Vagina (tissue), 2 donors: ENCODE measurements at regions of chr18 and their contacts with region 1.

Region 1: DNA sequence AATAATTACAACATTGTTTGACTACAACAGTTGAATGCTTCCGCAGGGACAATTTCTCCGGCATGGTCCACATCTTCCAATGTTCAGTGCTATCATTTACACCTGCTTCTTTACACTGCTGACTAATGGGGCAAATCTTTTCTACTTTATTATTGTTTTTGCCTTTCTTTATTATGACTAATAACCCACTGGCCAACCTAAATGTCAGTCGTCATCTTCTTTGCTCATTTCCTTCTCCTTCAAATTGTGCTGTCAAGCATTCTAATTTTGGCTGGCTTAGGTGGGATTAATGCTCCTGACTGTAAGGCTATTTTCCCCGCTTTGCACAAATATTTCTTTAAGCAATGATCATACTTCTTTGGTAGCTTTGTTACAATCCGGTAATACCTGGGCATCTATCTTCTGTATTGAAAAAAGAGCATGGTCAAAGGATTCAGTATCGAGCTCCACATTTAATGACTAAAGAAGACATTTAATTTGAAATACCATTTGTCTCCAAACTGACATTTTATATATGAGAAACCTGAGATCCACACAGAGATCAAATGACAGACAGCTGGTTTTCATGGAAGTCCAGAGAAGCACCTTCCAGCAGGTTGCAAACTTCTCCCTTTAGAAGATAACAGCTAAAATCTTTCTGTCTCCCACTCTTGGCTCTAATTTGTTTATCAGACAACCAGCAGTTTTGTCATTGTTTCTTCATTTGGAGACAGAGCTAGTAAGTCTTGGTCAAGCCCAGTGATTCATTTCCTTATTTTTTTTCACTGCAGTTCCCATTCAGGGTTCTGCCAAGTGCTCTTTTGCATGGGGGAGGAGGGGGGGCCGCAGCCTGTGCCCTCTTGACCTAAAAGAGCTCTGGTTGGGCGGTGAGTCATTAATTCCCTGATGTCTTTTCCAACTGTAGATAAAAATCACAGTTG is 132.9 kb downstream of the SOCS6 start:
- DNase-seq: no peak
- H3K4me3 ChIP-seq: no peak overlapping the region
- H3K27ac ChIP-seq: no peak overlapping the region
- H3K4me1 ChIP-seq: peaks cover 36% of the 10 kb centered on the region
- H3K27me3 ChIP-seq: no peaks in the 10 kb centered on the region
- CTCF ChIP-seq: no peak
- POLR2A ChIP-seq: no peak

Region 2: GRCh38 chr18:70205421-70206397 is 216.0 kb before region 1 on chr18 and contains the start of gene RTTN:
- intact Hi-C with region 1: loop called (anchors 10 kb)
- DNase-seq: peak in 1 of 2 donors; percentile 90
- H3K4me3 ChIP-seq: peak within 1 kb of the TSS; percentile 62 to 83
- H3K27ac ChIP-seq: peak within 1 kb of the TSS; percentile 97
- H3K4me1 ChIP-seq: peaks cover 11% of the 10 kb centered on the region
- H3K27me3 ChIP-seq: no peaks in the 10 kb centered on the region
- CTCF ChIP-seq: peak in 1 of 3 experiments; percentile 16
- POLR2A ChIP-seq: peak in 1 of 2 donors; percentile 11
- total RNA-seq, gene RTTN: 16.7 TPM